ENCODE measurements at regions of chr5 and their contacts with region 1.

Region 1: GRCh38 chr5:90131383-90132133 is 278.0 kb downstream of the CETN3 start:
- DNase-seq: no peak
- H3K4me3 ChIP-seq: no peak overlapping the region
- H3K27ac ChIP-seq: peak overlapping the region; percentile 89
- H3K4me1 ChIP-seq: peaks cover 14 to 40% of the 10 kb centered on the region in 2 donors
- H3K27me3 ChIP-seq: no peaks in the 10 kb centered on the region
- CTCF ChIP-seq: no peak

Region 2: DNA sequence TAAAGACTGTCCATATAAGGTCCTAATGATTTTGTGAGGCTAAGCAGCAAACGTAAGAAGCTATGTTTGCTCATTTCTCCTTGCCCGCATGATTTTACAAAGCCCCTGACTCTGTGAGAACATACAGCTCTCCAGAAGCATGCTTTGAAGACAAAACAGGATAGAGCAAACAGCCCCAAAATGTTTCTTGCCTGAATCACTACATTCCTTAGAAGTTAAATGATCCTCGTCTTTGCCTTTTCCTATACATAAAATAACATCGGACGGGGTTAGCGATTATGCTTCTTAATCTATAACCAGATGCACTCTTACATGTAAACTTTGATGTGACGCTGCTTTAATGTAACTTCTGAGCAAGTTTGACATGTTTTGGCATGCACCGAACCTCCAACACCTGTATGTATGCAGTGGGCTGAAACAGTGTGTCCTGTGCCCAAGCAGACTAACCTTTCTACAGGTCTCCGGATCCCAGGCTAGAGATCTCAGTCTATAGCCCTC is 75.7 kb before region 1 on chr5:
- intact Hi-C with region 1: loop called (anchors 5 kb)
- DNase-seq: no peak
- H3K4me3 ChIP-seq: no peak overlapping the region
- H3K27ac ChIP-seq: no peak overlapping the region
- H3K4me1 ChIP-seq: peaks cover 0 to 9% of the 10 kb centered on the region in 2 donors
- H3K27me3 ChIP-seq: no peaks in the 10 kb centered on the region
- CTCF ChIP-seq: no peak

Region 3: GRCh38 chr5:90233476-90233875 is 101.9 kb after region 1 on chr5:
- intact Hi-C with region 1: loop called (anchors 5 kb)
- DNase-seq: no peak
- H3K4me3 ChIP-seq: peak overlapping the region in 1 of 2 donors; percentile 26
- H3K27ac ChIP-seq: peak overlapping the region; percentile 65 to 68
- H3K4me1 ChIP-seq: peaks cover 0 to 22% of the 10 kb centered on the region in 2 donors
- H3K27me3 ChIP-seq: no peaks in the 10 kb centered on the region
- CTCF ChIP-seq: no peak

Measured in ascending aorta (tissue), 2 donors.